ENCODE measurements at regions of chr19 and their contacts with region 1.

Region 1: GRCh38 chr19:10695401-10696398 is 5.5 kb upstream of the QTRT1 start:
- DNase-seq: peak; percentile 97
- ATAC-seq: peak; percentile 98

Region 2: DNA sequence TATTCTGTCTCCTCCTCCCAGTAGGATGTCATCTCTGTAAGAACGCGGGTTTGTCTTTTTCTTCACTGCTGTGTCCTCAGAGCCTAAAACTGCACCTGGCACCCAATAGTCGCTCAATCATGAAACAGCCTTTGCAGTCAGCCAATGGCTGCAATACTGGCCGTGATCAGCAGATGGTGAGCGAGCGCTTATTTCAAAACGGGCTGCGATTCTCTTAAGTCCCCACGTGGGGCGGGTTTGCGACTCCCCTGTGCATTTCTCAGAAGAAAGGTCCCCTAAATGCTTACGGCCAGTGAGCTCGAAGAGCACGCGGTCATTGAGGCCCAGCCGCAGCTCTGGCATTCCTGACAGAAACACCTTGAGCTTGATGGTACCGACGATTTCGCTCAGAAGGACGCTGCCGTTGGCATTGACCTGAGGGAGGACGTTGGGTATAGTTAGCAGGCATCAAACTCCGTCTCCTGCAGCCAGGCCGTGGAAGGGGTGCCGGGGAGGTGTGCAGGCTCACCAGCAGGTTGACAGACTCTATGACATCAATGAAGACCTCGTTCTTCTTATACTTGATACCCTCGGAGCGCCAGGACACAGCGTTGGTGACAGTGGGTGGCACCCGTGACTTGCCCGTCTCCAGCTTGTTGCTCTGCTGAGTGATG is 114.6 kb before region 1 on chr19:
- intact Hi-C with region 1: loop called (anchors 5 kb)
- DNase-seq: peak; percentile 88
- ATAC-seq: peak; percentile 83 to 92

Region 3: GRCh38 chr19:10654493-10655304 is 41.0 kb before region 1 on chr19:
- intact Hi-C with region 1: loop called in 1 of 2 experiments (anchors 5 kb)
- DNase-seq: peak; percentile 58
- ATAC-seq: peak; percentile 39 to 41

Region 4: GRCh38 chr19:10769533-10770491 is 74.1 kb after region 1 on chr19:
- intact Hi-C with region 1: no loop called
- DNase-seq: peak; percentile 69
- ATAC-seq: peak; percentile 78 to 83

Region 5: DNA sequence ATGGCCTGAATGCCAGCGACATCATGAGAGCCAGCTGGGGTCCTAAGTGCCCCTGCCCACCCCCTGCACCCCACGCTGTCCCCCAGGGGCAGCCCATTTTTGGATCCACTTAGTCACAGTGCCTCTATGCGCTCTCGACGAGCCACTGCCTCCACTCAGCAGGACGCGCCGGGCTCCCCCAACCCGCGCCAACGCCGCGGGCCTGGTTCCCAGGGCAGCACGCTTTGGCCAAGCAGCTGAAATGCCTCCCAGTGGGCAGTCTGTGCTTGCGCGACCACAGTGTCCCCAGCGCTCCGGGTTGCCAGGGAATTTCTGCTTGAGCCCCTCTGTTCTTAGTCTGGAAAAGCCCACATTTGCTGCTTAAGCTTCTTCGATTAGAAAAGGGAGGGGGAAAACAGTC is 101.0 kb after region 1 on chr19:
- intact Hi-C with region 1: no loop called
- DNase-seq: no peak
- ATAC-seq: no peak

Measured in left cardiac atrium (tissue), 4 donors.